ENCODE measurements at regions of chr3 and their contacts with region 1.

Region 1: DNA sequence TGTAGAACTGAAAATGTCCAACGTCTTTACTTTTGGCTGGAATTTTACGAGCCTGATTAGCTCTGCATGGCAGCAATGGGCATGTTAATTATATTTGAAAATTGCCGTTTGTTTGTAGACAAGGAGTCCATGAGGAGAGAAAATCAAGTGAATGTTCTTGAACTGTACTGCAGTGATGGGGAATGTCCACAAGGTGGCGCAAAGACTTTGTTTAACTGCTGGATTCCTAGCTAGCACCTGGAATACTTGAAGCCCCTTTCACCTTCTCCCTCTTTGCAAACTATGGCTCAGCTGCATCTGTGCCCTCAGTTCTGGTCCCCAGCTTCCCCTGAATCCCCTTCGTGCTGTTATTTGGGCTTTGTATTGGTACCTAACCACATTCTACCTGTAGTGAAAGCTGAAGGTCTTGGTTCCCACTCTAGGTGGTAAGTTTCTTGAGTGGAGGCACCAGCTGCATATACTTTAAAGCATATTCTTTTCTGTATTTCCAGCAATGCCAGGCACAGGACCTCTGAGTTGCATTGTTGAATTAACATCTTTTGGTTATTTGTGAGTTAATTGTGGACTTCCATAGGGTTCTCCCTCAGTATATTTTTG is 25.3 kb downstream of the EXOG start:
- H3K4me3 ChIP-seq: no peak overlapping the region
- H3K27ac ChIP-seq: no peak overlapping the region
- H3K4me1 ChIP-seq: no peaks in the 10 kb centered on the region
- CTCF ChIP-seq: peak; percentile 46

Region 2: GRCh38 chr3:38117748-38118420 is 403.6 kb before region 1 on chr3:
- CTCF ChIA-PET with region 1: no interaction called
- POLR2A ChIA-PET with region 1: no interaction called
- H3K4me3 ChIP-seq: no peak overlapping the region
- H3K27ac ChIP-seq: no peak overlapping the region
- H3K4me1 ChIP-seq: no peaks in the 10 kb centered on the region
- CTCF ChIP-seq: peak; percentile 69

Region 3: GRCh38 chr3:38138349-38139190 is 382.9 kb before region 1 on chr3 and contains the start of gene MYD88:
- CTCF ChIA-PET with region 1: no interaction called
- POLR2A ChIA-PET with region 1: no interaction called
- H3K4me3 ChIP-seq: peak within 1 kb of the TSS; percentile 66
- H3K27ac ChIP-seq: no peak within 1 kb of the TSS; the same call in 1 of the 2 replicates
- H3K4me1 ChIP-seq: no peaks in the 10 kb centered on the region
- CTCF ChIP-seq: peak; percentile 40; the same call in 1 of the 2 replicates

Region 4: GRCh38 chr3:38507120-38507519 is 14.4 kb before region 1 on chr3:
- CTCF ChIA-PET with region 1: interaction called, 22 read pairs
- POLR2A ChIA-PET with region 1: no interaction called
- H3K4me3 ChIP-seq: no peak overlapping the region
- H3K27ac ChIP-seq: no peak overlapping the region
- H3K4me1 ChIP-seq: no peaks in the 10 kb centered on the region
- CTCF ChIP-seq: no peak

Region 5: DNA sequence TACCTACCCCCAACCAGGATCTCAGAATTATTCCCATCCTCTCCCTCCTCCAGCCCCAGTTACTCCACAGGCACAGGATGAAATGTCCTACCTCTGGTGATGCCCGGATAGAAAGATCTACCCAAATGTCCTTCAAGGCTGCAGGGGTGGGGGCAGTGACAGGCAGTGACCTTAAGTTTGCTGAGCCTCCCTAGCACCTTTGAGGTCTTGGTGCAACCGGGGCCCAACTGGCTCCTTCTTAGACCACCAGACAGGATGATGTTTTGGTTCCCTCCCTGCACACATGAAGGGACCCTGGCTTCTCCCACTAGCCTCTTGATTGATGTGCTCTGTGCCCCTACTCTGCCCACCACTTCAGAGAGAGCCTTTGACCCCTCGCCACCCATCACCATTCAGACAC is 11.0 kb after region 1 on chr3:
- CTCF ChIA-PET with region 1: interaction called, 14 read pairs
- POLR2A ChIA-PET with region 1: no interaction called
- H3K4me3 ChIP-seq: no peak overlapping the region
- H3K27ac ChIP-seq: no peak overlapping the region
- H3K4me1 ChIP-seq: no peaks in the 10 kb centered on the region
- CTCF ChIP-seq: no peak

Region 6: GRCh38 chr3:38620236-38620635 is 98.7 kb after region 1 on chr3:
- CTCF ChIA-PET with region 1: no interaction called
- POLR2A ChIA-PET with region 1: no interaction called
- H3K4me3 ChIP-seq: no peak overlapping the region
- H3K27ac ChIP-seq: no peak overlapping the region
- H3K4me1 ChIP-seq: no peaks in the 10 kb centered on the region
- CTCF ChIP-seq: no peak

Region 7: GRCh38 chr3:38651154-38651789 is 129.8 kb after region 1 on chr3:
- CTCF ChIA-PET with region 1: interaction called, 65 read pairs
- POLR2A ChIA-PET with region 1: no interaction called
- H3K4me3 ChIP-seq: no peak overlapping the region
- H3K27ac ChIP-seq: no peak overlapping the region
- H3K4me1 ChIP-seq: no peaks in the 10 kb centered on the region
- CTCF ChIP-seq: peak; percentile 70

Region 8: GRCh38 chr3:38662544-38662943 is 141.1 kb after region 1 on chr3:
- CTCF ChIA-PET with region 1: interaction called, 65 read pairs
- POLR2A ChIA-PET with region 1: no interaction called
- H3K4me3 ChIP-seq: no peak overlapping the region
- H3K27ac ChIP-seq: no peak overlapping the region
- H3K4me1 ChIP-seq: no peaks in the 10 kb centered on the region
- CTCF ChIP-seq: no peak

Region 9: DNA sequence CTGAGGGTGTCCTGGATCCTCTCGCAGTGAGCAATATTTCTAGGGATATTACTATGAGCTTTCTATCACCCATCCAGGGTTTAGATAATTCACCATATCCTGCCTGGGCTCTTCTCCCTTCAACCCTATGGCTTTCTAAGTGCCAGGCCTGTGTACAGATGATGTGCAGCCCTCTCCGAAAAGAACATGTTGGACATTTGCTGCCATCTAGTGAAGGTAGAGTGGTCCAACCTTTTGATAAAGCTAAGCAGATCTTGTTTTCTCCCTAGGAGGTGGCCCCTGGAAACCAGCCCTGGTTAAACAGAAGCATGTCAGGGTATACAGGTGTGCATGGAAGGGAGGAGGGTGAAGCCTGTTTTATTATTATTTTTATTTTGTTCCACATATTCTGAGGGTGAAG is 322.4 kb after region 1 on chr3:
- CTCF ChIA-PET with region 1: interaction called, 14 read pairs
- POLR2A ChIA-PET with region 1: no interaction called
- H3K4me3 ChIP-seq: no peak overlapping the region
- H3K27ac ChIP-seq: no peak overlapping the region
- H3K4me1 ChIP-seq: no peaks in the 10 kb centered on the region
- CTCF ChIP-seq: no peak; the same call in 1 of the 2 replicates

Region 10: DNA sequence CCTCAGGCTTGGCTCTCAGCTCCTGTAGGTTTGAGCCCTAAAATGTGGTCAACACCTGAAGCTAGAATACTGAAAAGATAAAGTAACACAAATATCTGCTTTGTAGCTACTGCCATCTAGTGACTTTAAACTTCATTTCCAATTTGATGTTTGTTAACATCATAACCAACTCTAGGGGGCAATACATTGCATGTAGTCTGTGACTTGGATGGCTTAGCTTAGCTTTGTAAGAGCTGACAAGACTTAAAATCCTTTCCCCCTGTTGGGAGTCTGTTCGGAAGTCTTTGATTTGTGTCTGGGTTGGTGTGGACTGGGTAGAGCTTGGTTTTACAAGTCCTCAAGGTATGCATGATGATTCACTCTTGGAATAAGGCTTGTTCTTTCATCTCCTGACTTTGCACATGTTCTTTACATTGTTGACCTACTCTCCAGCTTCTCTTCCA is 478.5 kb after region 1 on chr3:
- CTCF ChIA-PET with region 1: interaction called, 20 read pairs
- POLR2A ChIA-PET with region 1: no interaction called
- H3K4me3 ChIP-seq: no peak overlapping the region
- H3K27ac ChIP-seq: no peak overlapping the region
- H3K4me1 ChIP-seq: no peaks in the 10 kb centered on the region
- CTCF ChIP-seq: peak; percentile 52; the same call in 1 of the 2 replicates

Measured in HEK293 (cell line).